ENCODE measurements at regions of chr15 and their contacts with region 1.

Region 1: GRCh38 chr15:101641166-101641764 is 10.9 kb downstream of the TM2D3 start:
- DNase-seq: peak; percentile 86
- H3K4me3 Mint-ChIP-seq: no peak overlapping the region
- H3K27ac Mint-ChIP-seq: peak overlapping the region; percentile 71
- H3K4me1 Mint-ChIP-seq: peaks cover 29% of the 10 kb centered on the region
- H3K27me3 Mint-ChIP-seq: no peaks in the 10 kb centered on the region

Region 2: GRCh38 chr15:101288908-101289513 is 352.3 kb before region 1 on chr15:
- CTCF ChIA-PET with region 1: interaction called, 14 read pairs
- POLR2A ChIA-PET with region 1: interaction called, 4 read pairs
- intact Hi-C with region 1: no loop called
- DNase-seq: peak; percentile 6
- H3K4me3 Mint-ChIP-seq: no peak overlapping the region
- H3K27ac Mint-ChIP-seq: peak overlapping the region; percentile 55
- H3K4me1 Mint-ChIP-seq: peaks cover 51% of the 10 kb centered on the region
- H3K27me3 Mint-ChIP-seq: no peaks in the 10 kb centered on the region

Region 3: GRCh38 chr15:101305820-101306255 is 335.4 kb before region 1 on chr15:
- CTCF ChIA-PET with region 1: interaction called, 22 read pairs
- POLR2A ChIA-PET with region 1: no interaction called
- intact Hi-C with region 1: no loop called
- DNase-seq: no peak
- H3K4me3 Mint-ChIP-seq: no peak overlapping the region
- H3K27ac Mint-ChIP-seq: no peak overlapping the region
- H3K4me1 Mint-ChIP-seq: no peaks in the 10 kb centered on the region
- H3K27me3 Mint-ChIP-seq: no peaks in the 10 kb centered on the region

Region 4: GRCh38 chr15:101501703-101502373 is 139.4 kb before region 1 on chr15:
- CTCF ChIA-PET with region 1: interaction called, 22 read pairs
- POLR2A ChIA-PET with region 1: no interaction called
- intact Hi-C with region 1: no loop called
- DNase-seq: peak; percentile 70
- H3K4me3 Mint-ChIP-seq: no peak overlapping the region
- H3K27ac Mint-ChIP-seq: no peak overlapping the region
- H3K4me1 Mint-ChIP-seq: peaks cover 6% of the 10 kb centered on the region
- H3K27me3 Mint-ChIP-seq: peaks cover 15% of the 10 kb centered on the region

Region 5: GRCh38 chr15:101652098-101652782 is 11.0 kb after region 1 on chr15 and contains the start of gene TM2D3:
- CTCF ChIA-PET with region 1: interaction called, 27 read pairs
- POLR2A ChIA-PET with region 1: no interaction called
- intact Hi-C with region 1: loop called (anchors 1 kb)
- DNase-seq: peak; percentile 96
- H3K4me3 Mint-ChIP-seq: peak within 1 kb of the TSS; percentile 83
- H3K27ac Mint-ChIP-seq: peak within 1 kb of the TSS; percentile 90
- H3K4me1 Mint-ChIP-seq: peaks cover 38% of the 10 kb centered on the region
- H3K27me3 Mint-ChIP-seq: no peaks in the 10 kb centered on the region
- total RNA-seq, gene TM2D3: 41.7 to 48.1 TPM

Measured in activated CD4-positive, alpha-beta memory T cell treated with anti-CD3 and anti-CD28 coated beads for 36 hours (primary cell).